Panc1 (cell line): ENCODE measurements at regions of chr15 and their contacts with region 1.

Region 1: GRCh38 chr15:78979456-78980320 is 34.8 kb upstream of the CTSH start:
- DNase-seq: peak; percentile 54
- ATAC-seq: peak; percentile 88
- H3K4me3 ChIP-seq: no peak overlapping the region
- H3K27ac ChIP-seq: peak overlapping the region; percentile 69
- H3K4me1 ChIP-seq: peaks cover 7% of the 10 kb centered on the region
- H3K27me3 ChIP-seq: no peaks in the 10 kb centered on the region
- CTCF ChIP-seq: peak; percentile 86

Region 2: DNA sequence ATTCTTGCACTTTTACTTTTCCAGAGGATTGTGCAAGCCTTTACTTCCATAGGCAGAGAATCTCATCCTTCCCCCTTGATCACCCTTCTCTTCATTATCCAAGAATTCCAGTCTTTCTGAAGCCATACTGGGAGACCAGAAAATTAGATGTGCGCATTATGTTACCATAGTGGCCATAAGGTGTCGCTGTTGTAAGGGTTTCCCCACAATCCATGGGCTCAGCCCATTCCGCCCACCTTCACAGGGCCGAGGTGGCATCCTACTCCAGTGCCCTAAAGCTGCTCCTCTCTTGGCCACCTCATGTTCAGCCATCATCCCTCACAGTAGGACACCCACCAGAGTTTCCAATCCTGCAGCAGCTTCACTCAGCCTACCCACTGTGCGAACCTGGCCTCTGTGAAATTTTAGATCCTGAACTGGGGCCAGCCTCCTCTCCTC is 69.9 kb before region 1 on chr15:
- CTCF ChIA-PET with region 1: no interaction called
- POLR2A ChIA-PET with region 1: no interaction called
- in situ Hi-C with region 1: no loop called
- intact Hi-C with region 1: loop called (anchors 10 kb)
- DNase-seq: no peak
- ATAC-seq: peak; percentile 80
- H3K4me3 ChIP-seq: no peak overlapping the region
- H3K27ac ChIP-seq: no peak overlapping the region
- H3K4me1 ChIP-seq: peaks cover 3% of the 10 kb centered on the region; the same call in 1 of the 2 replicates
- H3K27me3 ChIP-seq: no peaks in the 10 kb centered on the region
- CTCF ChIP-seq: peak; percentile 86

Region 3: GRCh38 chr15:78930556-78931401 is 48.9 kb before region 1 on chr15:
- CTCF ChIA-PET with region 1: no interaction called
- POLR2A ChIA-PET with region 1: no interaction called
- in situ Hi-C with region 1: no loop called
- intact Hi-C with region 1: loop called (anchors 5 kb)
- DNase-seq: peak; percentile 85
- ATAC-seq: peak; percentile 87
- H3K4me3 ChIP-seq: no peak overlapping the region
- H3K27ac ChIP-seq: peak overlapping the region; percentile 97
- H3K4me1 ChIP-seq: peaks cover 81% of the 10 kb centered on the region
- H3K27me3 ChIP-seq: no peaks in the 10 kb centered on the region
- CTCF ChIP-seq: no peak

Region 4: DNA sequence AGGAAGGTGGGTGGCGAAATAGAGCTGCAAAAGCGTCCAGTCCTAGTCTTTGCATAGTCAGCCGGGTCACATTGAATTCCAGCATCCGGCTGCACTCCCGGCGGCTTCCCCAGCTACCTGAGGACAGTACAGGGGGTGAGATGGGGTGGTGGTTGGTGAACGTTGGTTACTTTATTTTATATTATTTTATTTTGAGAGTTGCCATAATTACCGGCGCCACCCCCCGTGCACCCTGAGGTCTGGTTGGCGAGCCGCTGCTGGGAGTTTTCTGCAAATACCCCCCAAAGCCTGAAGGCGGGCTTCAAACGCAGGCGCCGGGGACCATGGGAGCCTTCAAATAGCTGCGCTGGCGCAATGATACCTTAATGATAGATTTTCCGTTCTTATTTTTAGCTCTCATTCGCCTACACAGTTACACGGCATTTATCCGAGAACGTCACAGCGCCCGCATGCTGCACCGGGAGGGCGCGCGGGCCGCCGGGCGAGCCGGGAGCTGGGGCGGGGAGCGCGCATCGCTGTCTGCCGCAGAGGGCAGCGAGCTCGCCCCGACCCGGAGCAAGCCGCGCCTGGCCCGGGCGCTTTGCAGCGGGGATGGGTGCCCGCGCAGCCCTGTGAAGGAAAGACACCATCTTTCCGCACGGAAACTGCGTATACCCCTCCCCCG is 111.6 kb after region 1 on chr15:
- CTCF ChIA-PET with region 1: interaction called, 11 read pairs
- POLR2A ChIA-PET with region 1: no interaction called
- in situ Hi-C with region 1: no loop called
- intact Hi-C with region 1: no loop called
- DNase-seq: no peak
- ATAC-seq: peak; percentile 87
- H3K4me3 ChIP-seq: peak overlapping the region; percentile 35 to 44
- H3K27ac ChIP-seq: no peak overlapping the region
- H3K4me1 ChIP-seq: peaks cover 11% of the 10 kb centered on the region
- H3K27me3 ChIP-seq: peaks cover 14% of the 10 kb centered on the region
- CTCF ChIP-seq: no peak

Region 5: DNA sequence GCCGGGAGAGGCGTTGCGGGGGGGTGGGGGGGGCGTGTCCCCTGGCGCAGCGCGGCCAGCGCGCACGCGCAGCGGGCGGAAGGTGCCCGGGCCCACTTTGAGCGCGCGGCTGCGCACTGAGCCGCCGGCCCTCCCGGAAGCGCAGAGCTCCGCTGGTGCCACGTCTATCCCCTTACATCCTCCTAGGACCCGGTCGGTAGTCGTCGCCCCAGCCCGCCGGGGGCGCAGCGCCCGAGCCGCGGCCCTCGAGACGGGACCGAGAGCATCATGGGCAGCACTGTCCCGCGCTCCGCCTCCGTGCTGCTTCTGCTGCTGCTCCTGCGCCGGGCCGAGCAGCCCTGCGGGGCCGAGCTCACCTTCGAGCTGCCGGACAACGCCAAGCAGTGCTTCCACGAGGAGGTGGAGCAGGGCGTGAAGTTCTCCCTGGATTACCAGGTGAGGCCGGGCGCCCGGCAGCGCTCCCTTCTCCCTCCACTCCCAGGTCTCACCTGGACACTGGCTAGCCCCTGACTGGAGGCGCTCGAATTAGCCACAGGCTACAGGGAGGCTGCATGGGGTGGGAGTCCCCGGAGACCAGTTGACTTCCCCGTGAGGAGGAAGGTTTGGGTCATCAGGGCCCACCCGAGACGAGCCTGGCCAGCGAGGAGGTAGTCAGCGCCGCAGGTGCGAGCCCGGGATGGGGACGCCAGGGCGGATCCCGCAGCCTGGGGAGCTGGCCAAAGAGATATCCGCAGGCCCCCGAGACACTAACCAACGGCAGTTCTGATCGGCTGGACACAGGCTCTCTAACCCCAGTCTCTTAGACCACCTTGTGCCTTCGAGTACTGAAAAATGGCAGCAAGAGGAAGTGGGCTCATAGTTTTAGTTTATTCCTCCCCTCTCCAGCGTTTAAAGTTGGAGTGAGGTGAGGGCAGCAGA is 331.6 kb after region 1 on chr15 and contains the start of gene TMED3:
- CTCF ChIA-PET with region 1: no interaction called
- POLR2A ChIA-PET with region 1: no interaction called
- in situ Hi-C with region 1: no loop called
- intact Hi-C with region 1: no loop called
- DNase-seq: peak; percentile 46
- ATAC-seq: peak; percentile 99
- H3K4me3 ChIP-seq: peak within 1 kb of the TSS; percentile 91 to 98
- H3K27ac ChIP-seq: peak within 1 kb of the TSS; percentile 94
- H3K4me1 ChIP-seq: peaks cover 12% of the 10 kb centered on the region; the same call in 1 of the 2 replicates
- H3K27me3 ChIP-seq: peaks cover 27% of the 10 kb centered on the region
- CTCF ChIP-seq: no peak
- total RNA-seq, gene TMED3: 137 TPM

Region 6: DNA sequence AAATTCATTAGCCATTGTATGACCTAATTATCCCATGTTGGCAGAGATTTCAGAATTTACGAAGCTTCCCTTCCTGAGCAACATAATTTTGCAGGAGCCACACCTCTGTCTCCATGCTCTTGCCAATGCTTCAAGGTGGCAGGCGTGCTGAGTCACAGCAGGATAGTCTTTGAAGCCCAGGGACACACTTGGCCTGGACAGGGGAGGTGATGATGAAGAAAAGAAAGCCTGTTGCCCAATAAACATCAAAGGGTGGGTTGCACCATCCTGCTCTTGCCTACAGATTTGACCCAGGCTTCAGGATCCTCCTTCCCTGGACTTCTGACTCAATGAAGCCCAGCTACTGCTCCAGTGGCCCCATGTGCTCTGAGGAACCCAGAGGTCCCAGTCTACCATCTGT is 569.5 kb after region 1 on chr15:
- CTCF ChIA-PET with region 1: no interaction called
- POLR2A ChIA-PET with region 1: no interaction called
- in situ Hi-C with region 1: no loop called
- intact Hi-C with region 1: no loop called
- DNase-seq: no peak
- ATAC-seq: no peak
- H3K4me3 ChIP-seq: no peak overlapping the region
- H3K27ac ChIP-seq: no peak overlapping the region
- H3K4me1 ChIP-seq: no peaks in the 10 kb centered on the region
- H3K27me3 ChIP-seq: peaks cover 10% of the 10 kb centered on the region
- CTCF ChIP-seq: no peak